Right ventricle myocardium inferior (tissue), 1 donor: ENCODE measurements at regions of chr3 and their contacts with region 1.

Region 1: DNA sequence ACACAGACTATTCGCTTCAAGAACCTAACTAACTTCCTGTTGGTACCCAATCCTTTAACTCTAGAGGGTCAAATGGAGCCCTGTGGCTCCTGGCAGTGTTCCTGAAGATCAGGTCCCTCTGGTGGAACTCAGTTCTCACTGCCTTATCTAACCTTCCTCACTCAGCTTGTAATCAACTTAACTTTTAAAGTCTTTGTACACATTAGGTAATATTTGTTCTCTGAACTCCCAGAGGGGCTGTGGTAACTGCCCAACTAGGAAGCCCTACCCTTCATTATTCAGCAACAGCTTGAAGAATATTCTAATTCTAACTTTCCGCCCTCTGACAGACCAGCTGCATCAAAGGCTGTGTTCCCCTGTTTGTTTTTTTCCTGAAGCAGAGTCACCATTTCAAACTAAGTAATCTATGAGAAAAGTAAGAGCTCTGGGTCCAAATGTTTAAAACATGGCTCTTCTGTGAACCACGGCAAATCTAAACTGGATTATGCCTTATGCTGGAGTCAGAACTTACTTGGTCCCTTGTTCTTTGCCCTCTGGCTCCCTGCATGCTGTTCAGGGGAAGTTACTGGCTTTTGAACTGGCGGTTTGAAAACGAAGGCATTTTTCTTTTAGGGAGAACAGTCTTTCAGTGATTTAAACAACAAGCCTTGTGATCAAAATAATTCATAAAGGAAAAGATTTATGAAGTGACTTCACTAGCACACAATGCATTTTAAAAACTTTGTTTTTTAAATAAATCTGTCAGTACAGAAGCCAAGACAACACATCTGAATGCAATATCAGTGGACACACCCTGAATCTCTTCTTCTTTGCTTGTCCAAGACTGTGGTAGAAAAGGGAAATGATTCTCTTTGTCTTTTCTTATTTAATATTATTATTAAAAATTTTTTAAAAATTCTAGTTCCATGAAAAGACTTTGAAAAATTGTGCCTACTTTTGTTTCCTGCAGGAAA is 365.6 kb downstream of the TIGIT start:
- DNase-seq: no peak
- ATAC-seq: peak; percentile 75

Region 2: DNA sequence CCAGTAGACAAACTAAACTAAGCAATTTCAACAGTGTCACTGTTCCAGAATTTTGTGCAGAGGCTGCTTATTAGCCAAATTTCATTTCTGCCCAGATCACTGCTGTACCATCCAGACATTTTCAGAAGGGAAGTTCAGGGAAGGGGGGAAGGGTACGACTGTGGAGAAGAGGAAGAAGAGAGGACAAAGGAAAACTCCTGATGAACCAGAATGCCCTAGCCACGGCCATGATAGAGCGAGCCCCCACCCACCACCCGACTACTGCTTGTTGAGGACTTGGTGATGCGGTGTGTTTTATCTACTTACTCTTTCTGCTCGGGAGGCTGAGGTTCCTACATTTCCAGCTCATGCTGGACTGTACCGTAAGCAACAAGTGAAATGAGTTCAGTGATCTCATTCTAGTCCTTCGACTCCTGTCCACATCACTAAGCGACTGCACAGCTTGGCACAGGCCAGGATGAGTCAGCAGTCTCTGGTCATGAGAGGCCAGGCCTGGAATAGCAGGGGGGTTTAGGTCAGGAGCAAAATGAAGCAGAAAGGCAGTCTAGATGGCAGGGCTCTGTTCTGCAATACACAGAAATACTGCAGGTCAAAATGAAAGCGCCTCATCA is 34.7 kb before region 1 on chr3:
- intact Hi-C with region 1: loop called (anchors 5 kb)
- DNase-seq: peak; percentile 95
- ATAC-seq: peak; percentile 95